ENCODE measurements at regions of chr14 and their contacts with region 1.

Region 1: GRCh38 chr14:90697577-90698206 is 118.5 kb downstream of the TTC7B start:
- DNase-seq: peak; percentile 59
- H3K4me3 Mint-ChIP-seq: no peak overlapping the region
- H3K27ac Mint-ChIP-seq: no peak overlapping the region
- H3K4me1 Mint-ChIP-seq: no peaks in the 10 kb centered on the region
- H3K27me3 Mint-ChIP-seq: peaks cover 3% of the 10 kb centered on the region

Region 2: DNA sequence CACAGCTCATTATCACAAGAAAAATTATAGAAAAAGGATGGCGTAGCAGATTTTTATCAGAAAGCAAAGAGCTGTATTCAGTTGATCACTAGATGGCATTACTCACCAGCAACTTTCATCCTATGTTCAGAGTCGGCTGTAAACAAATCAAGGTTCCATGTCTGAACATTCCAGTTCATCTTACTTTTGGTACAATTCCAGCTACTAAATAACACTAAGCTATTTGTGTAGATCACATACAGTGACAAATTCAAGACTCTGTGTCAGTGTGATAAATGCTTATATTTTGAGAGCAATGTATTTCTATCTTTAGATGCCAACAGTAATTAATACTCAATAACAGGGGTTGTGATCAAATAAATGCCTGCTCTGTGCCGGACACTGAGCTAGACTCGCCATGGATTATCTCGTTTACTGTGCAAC is 396.0 kb before region 1 on chr14:
- intact Hi-C with region 1: loop called (anchors 5 kb)
- DNase-seq: no peak
- H3K4me3 Mint-ChIP-seq: no peak overlapping the region
- H3K27ac Mint-ChIP-seq: no peak overlapping the region
- H3K4me1 Mint-ChIP-seq: peaks cover 18% of the 10 kb centered on the region
- H3K27me3 Mint-ChIP-seq: no peaks in the 10 kb centered on the region

Region 3: GRCh38 chr14:90368946-90369721 is 328.6 kb before region 1 on chr14:
- intact Hi-C with region 1: loop called (anchors 1 kb)
- DNase-seq: no peak
- H3K4me3 Mint-ChIP-seq: no peak overlapping the region
- H3K27ac Mint-ChIP-seq: no peak overlapping the region
- H3K4me1 Mint-ChIP-seq: no peaks in the 10 kb centered on the region
- H3K27me3 Mint-ChIP-seq: peaks cover 6% of the 10 kb centered on the region

Region 4: DNA sequence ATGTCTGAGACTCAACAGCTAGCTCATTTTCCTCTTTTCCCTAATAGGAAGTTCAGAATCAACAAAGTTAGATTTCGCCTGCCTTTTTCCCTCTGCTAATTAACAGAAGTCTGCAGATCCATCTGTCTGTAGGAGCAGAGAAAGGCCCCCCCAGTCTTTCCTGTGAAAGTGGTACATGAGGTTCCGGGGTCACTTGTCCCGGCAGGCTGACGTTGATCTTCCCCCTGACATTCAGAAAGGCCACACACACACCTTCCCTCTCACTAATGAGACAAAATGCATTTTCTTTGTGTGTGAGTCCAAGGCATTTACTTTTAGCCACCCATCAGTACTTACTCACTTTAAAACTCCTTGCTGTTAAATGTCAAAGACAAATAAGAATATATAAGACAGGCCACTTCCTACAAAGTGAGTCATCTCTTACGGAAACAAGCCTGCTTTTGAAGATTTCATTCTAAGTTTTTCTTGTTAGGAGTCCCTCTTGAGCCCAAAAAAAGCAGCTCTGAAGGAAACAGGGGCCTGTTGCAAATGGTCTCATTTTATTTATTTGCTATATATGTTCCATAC is 20.1 kb before region 1 on chr14:
- intact Hi-C with region 1: loop called (anchors 2 kb)
- DNase-seq: no peak
- H3K4me3 Mint-ChIP-seq: peak overlapping the region; percentile 23
- H3K27ac Mint-ChIP-seq: peak overlapping the region; percentile 85
- H3K4me1 Mint-ChIP-seq: peaks cover 36% of the 10 kb centered on the region
- H3K27me3 Mint-ChIP-seq: no peaks in the 10 kb centered on the region

Region 5: GRCh38 chr14:90785471-90785870 is 87.8 kb after region 1 on chr14:
- intact Hi-C with region 1: no loop called
- DNase-seq: no peak
- H3K4me3 Mint-ChIP-seq: no peak overlapping the region
- H3K27ac Mint-ChIP-seq: no peak overlapping the region
- H3K4me1 Mint-ChIP-seq: no peaks in the 10 kb centered on the region
- H3K27me3 Mint-ChIP-seq: no peaks in the 10 kb centered on the region

Region 6: DNA sequence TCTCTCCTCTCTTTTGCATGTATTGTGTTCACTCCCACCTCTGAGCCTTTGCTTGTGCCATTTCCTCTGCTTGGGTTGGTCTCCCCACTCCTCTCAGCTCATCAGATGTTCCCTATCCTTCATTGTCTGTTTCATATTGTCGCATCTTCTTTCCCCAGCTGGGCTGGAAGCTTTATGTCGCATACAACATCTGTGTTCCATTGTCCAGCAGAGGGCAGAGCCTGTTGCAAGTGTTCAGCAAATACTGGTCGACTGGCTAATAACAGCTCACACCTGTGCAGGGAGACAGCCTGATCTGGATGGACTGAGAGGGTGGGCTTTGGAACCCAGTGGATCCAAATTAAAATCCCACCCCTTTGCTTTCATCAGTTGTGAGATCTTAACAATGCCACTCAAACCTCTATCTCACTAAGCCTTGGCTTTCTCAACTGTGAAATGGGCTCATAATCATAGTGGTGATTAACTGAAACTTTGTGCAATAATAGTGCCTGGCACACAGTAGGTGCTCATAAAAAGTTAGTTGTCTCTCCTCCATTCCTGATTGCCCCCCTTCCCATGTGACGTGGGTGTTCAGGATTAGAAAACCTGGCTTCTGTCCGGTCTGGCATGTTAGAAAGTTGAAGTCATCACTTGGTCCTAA is 1891.6 kb after region 1 on chr14:
- intact Hi-C with region 1: no loop called
- DNase-seq: no peak
- H3K4me3 Mint-ChIP-seq: no peak overlapping the region
- H3K27ac Mint-ChIP-seq: peak overlapping the region; percentile 59
- H3K4me1 Mint-ChIP-seq: peaks cover 65% of the 10 kb centered on the region
- H3K27me3 Mint-ChIP-seq: peaks cover 3% of the 10 kb centered on the region

Measured in activated T-helper 1 cell treated with anti-CD3 and anti-CD28 coated beads, Interleukin-12 subunit alpha, Interleukin-12 subunit beta, Interleukin-2, Interleukin-4 antibody, amounts not matched to agents 30 ng/mL and 10 ng/mL and 1 ng/mL, durations not matched to agents 14 hours and 24 hours and 36 hours (primary cell).